Calu3 (cell line): ENCODE measurements at regions of chr12 and their contacts with region 1.

Region 1: DNA sequence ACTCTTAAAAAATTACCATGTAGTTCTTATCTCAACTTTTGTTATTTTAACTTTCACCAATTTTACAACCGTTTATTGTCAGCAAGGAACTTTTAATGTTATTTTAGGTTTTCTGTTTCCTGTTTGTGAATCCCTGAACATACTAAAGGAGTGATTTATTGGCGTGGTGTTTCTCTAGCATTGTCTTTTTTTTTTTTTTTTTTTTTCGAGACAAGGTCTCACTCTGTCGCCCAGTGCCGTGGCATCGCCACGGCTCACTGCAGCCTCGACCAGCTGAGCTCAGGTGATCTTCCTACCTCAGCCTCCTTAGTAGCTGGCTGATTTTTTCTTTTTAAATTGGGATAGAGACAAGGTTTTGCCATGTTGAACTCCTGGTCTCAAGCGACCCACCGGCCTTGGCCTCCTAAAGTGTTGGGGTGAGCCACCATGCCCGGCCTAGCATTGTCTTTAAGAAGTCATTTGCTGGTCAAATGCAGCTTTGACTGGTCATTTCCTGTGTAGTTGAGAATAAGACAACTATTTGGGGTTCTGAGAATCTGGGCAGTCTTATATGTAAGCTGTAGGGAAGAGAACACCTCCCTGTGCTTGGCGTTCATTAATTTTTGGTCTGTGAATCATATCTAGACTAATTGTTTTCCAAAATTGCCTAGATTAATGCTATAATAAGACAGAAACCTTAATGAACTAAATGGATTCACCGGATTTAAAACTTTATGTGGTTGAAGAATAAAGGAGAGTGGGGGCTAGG is 2.1 kb downstream of the WASHC4 start:
- DNase-seq: peak; percentile 25
- H3K4me3 Mint-ChIP-seq: peak overlapping the region; percentile 98
- H3K27ac Mint-ChIP-seq: peak overlapping the region; percentile 92
- H3K4me1 Mint-ChIP-seq: peaks cover 39% of the 10 kb centered on the region
- H3K27me3 Mint-ChIP-seq: no peaks in the 10 kb centered on the region
- CTCF ChIP-seq: no peak

Region 2: DNA sequence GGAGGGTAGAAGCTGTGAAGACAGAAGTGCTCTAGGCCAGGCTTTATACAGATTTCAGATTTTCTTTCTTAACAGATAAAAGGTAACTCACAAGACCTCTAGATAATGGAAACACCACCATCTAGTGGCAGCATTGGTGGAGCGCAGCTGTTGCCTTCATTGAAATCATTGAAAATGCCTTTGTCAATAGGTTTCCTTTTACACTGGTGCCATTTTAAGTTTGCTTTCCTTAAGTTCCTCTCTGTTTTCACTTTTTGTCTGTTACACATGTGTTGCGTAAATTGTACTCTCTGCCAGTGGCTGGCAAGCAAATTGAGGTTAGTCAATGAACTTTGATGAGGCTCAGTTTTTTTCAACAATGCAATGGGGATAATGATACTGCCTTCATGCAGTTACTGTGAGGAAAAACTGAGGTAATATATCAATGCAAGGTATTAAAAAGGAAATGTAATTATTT is 56.5 kb before region 1 on chr12:
- CTCF ChIA-PET with region 1: no interaction called
- intact Hi-C with region 1: no loop called
- DNase-seq: peak; percentile 77
- H3K4me3 Mint-ChIP-seq: no peak overlapping the region
- H3K27ac Mint-ChIP-seq: no peak overlapping the region
- H3K4me1 Mint-ChIP-seq: no peaks in the 10 kb centered on the region
- H3K27me3 Mint-ChIP-seq: no peaks in the 10 kb centered on the region
- CTCF ChIP-seq: peak; percentile 83

Region 3: DNA sequence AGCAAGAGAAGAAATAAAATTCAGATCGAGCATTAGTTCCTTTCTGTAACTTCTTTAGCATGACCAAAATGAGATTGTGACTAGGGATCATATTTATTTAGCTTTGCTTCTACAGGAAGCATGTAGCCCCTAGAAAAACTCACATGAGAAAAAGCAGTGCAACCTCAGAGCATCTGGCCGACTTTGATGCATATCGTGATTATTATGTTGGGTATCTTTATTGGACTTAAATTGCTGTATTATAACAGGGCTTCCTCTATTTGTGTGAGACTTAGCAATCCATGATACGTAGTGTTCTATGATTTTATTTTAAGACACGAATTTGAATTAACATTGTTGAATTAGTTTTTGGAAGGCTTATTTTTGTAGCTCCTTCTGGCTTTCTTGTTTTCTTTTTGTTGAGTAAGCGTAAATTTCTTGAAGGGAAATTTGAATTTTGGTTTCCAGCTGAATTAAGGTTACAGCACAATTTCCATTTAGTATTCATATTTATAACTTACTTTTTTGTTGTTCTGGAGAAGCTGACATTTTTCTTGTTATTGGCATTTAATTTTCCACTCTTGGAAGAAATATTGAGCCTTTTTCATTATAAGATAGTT is 31.8 kb after region 1 on chr12:
- CTCF ChIA-PET with region 1: no interaction called
- intact Hi-C with region 1: loop called (anchors 5 kb)
- DNase-seq: no peak
- H3K4me3 Mint-ChIP-seq: no peak overlapping the region
- H3K27ac Mint-ChIP-seq: no peak overlapping the region
- H3K4me1 Mint-ChIP-seq: no peaks in the 10 kb centered on the region
- H3K27me3 Mint-ChIP-seq: no peaks in the 10 kb centered on the region
- CTCF ChIP-seq: no peak